ENCODE measurements at regions of chr13 and their contacts with region 1.

Region 1: DNA sequence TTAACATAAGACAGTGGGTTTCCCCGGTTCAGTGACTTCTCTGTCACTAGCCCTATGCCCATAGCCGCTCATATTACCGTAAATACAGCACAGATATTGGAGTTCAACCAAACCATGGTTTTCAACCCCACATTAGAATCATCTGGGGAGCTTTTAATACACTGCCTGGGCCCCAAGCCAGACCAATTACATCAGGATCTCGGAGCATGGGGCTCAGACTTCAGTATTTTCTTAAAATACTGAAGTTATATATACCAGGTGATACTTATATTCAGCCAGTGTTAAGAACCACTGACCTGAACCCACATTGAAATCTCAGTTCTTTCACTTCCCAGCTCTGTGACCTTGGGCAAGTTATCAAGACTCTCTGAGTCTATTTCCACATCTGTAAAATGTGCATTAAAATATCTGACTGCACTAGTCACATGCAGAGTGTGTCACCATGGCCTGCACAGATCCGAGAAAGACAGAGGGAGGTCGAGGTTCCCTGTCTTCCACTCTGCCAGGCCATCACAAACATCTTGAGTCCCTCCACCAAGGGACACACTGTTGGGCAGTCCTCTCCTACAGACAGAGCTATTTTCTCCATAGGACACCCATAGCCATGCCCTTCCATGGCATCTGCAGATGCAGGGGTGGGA is 32.2 kb upstream of the IPO5 start:
- DNase-seq: no peak
- ATAC-seq: no peak
- H3K4me3 ChIP-seq: no peak overlapping the region
- H3K4me3 Mint-ChIP-seq: no peak overlapping the region
- H3K27ac ChIP-seq: no peak overlapping the region
- H3K27ac Mint-ChIP-seq: no peak overlapping the region
- H3K4me1 ChIP-seq: no peaks in the 10 kb centered on the region
- H3K4me1 Mint-ChIP-seq: no peaks in the 10 kb centered on the region
- H3K27me3 ChIP-seq: peaks cover 0 to 5% of the 10 kb centered on the region in 2 experiments
- H3K27me3 Mint-ChIP-seq: peaks cover 2 to 12% of the 10 kb centered on the region in 2 donors

Region 2: GRCh38 chr13:97058391-97058790 is 862.9 kb before region 1 on chr13:
- CTCF ChIA-PET with region 1: no interaction called
- POLR2A ChIA-PET with region 1: interaction called in 1 of 2 experiments, 10 read pairs
- DNase-seq: no peak
- ATAC-seq: no peak
- H3K4me3 ChIP-seq: no peak overlapping the region
- H3K4me3 Mint-ChIP-seq: no peak overlapping the region
- H3K27ac ChIP-seq: no peak overlapping the region
- H3K27ac Mint-ChIP-seq: no peak overlapping the region
- H3K4me1 ChIP-seq: no peaks in the 10 kb centered on the region
- H3K4me1 Mint-ChIP-seq: no peaks in the 10 kb centered on the region
- H3K27me3 ChIP-seq: no peaks in the 10 kb centered on the region
- H3K27me3 Mint-ChIP-seq: peaks cover 27 to 31% of the 10 kb centered on the region in 2 donors

Region 3: DNA sequence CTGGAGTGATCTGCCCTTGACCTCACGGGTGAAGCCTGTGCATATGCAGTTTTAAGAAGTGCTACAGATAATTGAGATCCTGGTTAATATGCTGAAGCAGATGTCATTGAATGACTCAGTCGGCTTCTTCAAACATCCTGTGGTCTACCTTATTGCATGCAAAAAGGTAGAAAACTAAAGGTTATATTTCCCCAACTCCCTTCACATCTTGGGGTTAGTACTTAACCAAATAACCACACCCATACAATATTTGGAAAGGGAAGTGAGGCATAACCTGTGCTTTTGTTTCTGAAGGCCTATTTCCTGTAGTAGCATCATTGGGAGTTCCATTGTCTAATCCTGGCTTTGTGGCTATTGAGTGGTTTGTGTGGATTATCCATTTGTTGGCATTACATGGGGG is 429.0 kb before region 1 on chr13:
- CTCF ChIA-PET with region 1: no interaction called
- POLR2A ChIA-PET with region 1: no interaction called
- DNase-seq: no peak
- ATAC-seq: no peak
- H3K4me3 ChIP-seq: no peak overlapping the region
- H3K4me3 Mint-ChIP-seq: no peak overlapping the region
- H3K27ac ChIP-seq: no peak overlapping the region
- H3K27ac Mint-ChIP-seq: no peak overlapping the region
- H3K4me1 ChIP-seq: no peaks in the 10 kb centered on the region
- H3K4me1 Mint-ChIP-seq: no peaks in the 10 kb centered on the region
- H3K27me3 ChIP-seq: no peaks in the 10 kb centered on the region
- H3K27me3 Mint-ChIP-seq: peaks cover 0 to 15% of the 10 kb centered on the region in 2 donors

Measured in T-cell (primary cell).